SK-N-SH (cell line): ENCODE measurements at regions of chr19 and their contacts with region 1.

Region 1: DNA sequence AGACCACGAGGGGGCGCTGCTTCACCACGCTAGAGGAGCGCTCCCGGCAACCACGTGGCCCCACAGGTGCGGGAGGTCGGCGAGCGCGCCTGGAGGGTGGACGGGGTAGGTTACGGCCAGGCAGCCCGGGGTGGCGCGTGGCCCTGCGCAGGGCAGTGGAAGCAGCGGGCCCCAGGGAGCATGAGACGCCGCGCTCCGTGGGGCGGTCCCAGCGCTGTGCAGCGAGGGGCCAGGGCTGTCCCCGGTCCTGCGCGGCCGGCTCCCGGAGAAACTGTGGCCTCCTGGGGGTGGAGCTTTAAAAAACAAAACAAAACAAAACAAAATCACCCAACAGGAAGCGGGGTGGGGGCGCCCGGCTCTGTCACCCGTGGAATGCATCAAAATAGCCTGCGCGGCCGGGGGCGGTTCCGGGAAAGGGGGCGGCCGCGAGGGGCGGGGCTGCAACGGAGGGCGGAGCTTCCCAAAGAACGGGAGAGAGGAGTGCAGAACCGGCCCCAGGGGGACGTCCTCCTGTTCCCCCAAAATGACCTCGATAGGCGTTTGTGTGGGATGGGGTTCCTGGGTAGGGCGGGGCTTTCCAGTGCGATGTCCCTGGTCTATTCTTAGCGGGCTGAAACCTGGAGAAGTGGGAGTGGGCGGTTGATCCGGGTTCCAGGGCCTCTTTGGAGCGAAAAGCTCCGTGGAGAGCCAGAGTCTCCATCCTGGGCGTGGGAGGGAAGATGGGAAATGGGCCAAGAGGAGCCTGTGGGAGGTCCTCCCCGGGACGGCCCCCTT is 27.3 kb downstream of the NUMBL start:
- DNase-seq: peak; percentile 93
- H3K4me3 ChIP-seq: peak overlapping the region; percentile 61 to 91
- H3K27ac ChIP-seq: peak overlapping the region; percentile 62 to 67
- H3K4me1 ChIP-seq: peaks cover 6 to 10% of the 10 kb centered on the region in 2 experiments; a peak in 3 of 4 replicates
- H3K27me3 ChIP-seq: no peaks in the 10 kb centered on the region
- CTCF ChIP-seq: no peak; the same call in 1 of the 2 replicates
- EP300 ChIP-seq: no peak
- RAD21 ChIP-seq: peak; percentile 89

Region 2: GRCh38 chr19:40584007-40584406 is 79.1 kb before region 1 on chr19:
- CTCF ChIA-PET with region 1: no interaction called
- POLR2A ChIA-PET with region 1: no interaction called
- DNase-seq: peak; percentile 31
- H3K4me3 ChIP-seq: no peak overlapping the region
- H3K27ac ChIP-seq: no peak overlapping the region
- H3K4me1 ChIP-seq: no peaks in the 10 kb centered on the region
- H3K27me3 ChIP-seq: no peaks in the 10 kb centered on the region
- CTCF ChIP-seq: peak; percentile 47
- EP300 ChIP-seq: no peak
- RAD21 ChIP-seq: no peak

Region 3: DNA sequence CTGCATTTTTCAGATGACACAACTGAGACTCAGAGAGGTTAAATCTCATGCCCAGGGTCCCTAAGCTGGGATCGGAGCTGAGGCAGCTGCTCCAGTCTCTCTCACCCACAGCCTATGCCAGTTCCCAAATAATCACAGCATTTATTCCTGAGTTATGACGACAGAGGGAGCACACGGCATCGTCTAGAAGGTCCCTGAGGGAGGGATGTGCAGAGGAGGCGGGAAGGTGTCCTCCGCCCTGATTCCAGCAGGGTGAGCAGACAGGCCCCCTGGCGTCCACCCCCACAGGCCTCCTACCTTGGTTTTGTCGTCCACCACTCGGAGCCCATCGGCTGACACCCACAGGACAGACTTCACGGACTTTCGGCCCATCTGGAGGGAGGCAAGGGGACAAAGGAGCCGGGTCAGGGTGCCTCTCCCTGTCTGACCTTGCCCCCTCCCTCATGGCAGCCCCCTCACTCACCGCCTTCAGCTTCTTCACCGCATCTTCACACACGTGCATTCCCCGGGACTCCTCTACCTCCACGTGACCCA is 19.4 kb after region 1 on chr19:
- CTCF ChIA-PET with region 1: interaction called, 14 read pairs
- POLR2A ChIA-PET with region 1: no interaction called
- DNase-seq: no peak
- H3K4me3 ChIP-seq: no peak overlapping the region
- H3K27ac ChIP-seq: no peak overlapping the region
- H3K4me1 ChIP-seq: no peaks in the 10 kb centered on the region; a peak in 1 of 4 replicates
- H3K27me3 ChIP-seq: no peaks in the 10 kb centered on the region
- CTCF ChIP-seq: no peak
- EP300 ChIP-seq: no peak
- RAD21 ChIP-seq: no peak

Region 4: DNA sequence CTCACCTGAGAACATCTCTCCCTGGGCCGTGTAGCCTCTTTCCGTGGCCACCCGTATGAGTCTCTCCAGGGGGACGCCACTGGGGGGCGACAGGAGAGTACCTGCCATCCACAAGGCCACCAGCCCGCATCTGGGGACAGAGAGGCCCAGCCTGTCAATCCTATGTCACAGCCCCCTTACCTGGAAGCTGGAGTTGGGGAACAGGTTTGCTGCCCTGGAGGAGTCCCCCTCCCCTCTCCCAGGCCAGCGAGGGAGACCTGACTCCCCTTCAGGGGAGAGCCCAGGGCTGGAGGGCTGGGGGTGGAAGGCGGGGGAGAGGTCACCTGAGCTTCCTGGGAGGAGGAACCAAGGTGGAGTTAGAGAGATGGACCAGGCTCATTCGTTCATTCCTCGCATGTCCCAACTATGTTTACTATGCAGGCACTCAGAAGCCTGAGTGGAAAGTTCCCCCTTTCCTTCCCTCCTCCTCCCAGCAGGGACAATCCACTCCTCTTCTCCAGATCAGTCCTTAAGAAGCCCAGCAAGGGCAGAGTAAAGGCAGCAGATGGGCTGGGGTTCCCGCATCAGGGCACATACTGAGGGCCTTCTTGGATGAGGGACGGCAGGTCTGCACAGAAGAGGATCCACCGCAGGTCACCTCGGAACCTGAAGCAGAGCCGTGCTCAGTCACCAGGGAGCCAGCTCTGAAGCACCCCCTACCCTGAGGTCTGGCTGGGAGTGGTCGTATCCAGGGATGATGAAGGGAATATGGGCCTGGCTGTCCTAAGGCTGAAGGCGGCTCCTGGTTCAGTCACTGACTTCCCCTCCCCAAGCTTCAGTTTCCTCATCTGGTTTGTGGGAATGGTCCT is 81.7 kb after region 1 on chr19:
- CTCF ChIA-PET with region 1: interaction called, 10 read pairs
- POLR2A ChIA-PET with region 1: no interaction called
- DNase-seq: peak; percentile 51
- H3K4me3 ChIP-seq: no peak overlapping the region
- H3K27ac ChIP-seq: peak overlapping the region in 1 of 2 experiments; percentile 30; a peak in 1 of 4 replicates
- H3K4me1 ChIP-seq: peaks cover 9 to 11% of the 10 kb centered on the region in 2 experiments; a peak in 1 of 4 replicates
- H3K27me3 ChIP-seq: no peaks in the 10 kb centered on the region
- CTCF ChIP-seq: no peak; the same call in 1 of the 2 replicates
- EP300 ChIP-seq: no peak
- RAD21 ChIP-seq: no peak

Region 5: DNA sequence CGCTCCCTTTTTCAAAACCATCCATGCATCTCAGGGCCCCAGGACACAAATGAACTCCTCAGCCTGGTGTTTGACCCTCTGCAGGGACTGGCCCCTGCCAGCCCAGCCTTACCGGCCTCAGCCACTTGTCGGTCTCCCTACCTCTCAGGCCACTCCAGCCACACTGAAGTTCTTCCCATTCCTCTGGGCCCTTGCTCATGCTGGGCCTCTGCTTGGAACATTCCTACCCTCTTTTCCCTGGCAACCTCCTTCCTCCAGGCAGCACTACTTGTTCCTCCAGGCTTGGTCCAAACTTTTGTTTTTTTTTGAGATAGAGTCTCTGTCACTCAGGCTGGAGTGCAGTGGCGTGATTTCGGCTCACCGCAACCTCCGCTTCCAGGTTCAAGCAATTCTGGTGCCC is 128.2 kb after region 1 on chr19:
- CTCF ChIA-PET with region 1: no interaction called
- POLR2A ChIA-PET with region 1: no interaction called
- DNase-seq: no peak
- H3K4me3 ChIP-seq: no peak overlapping the region
- H3K27ac ChIP-seq: no peak overlapping the region
- H3K4me1 ChIP-seq: no peaks in the 10 kb centered on the region
- H3K27me3 ChIP-seq: no peaks in the 10 kb centered on the region
- CTCF ChIP-seq: no peak
- EP300 ChIP-seq: no peak
- RAD21 ChIP-seq: no peak

Region 6: DNA sequence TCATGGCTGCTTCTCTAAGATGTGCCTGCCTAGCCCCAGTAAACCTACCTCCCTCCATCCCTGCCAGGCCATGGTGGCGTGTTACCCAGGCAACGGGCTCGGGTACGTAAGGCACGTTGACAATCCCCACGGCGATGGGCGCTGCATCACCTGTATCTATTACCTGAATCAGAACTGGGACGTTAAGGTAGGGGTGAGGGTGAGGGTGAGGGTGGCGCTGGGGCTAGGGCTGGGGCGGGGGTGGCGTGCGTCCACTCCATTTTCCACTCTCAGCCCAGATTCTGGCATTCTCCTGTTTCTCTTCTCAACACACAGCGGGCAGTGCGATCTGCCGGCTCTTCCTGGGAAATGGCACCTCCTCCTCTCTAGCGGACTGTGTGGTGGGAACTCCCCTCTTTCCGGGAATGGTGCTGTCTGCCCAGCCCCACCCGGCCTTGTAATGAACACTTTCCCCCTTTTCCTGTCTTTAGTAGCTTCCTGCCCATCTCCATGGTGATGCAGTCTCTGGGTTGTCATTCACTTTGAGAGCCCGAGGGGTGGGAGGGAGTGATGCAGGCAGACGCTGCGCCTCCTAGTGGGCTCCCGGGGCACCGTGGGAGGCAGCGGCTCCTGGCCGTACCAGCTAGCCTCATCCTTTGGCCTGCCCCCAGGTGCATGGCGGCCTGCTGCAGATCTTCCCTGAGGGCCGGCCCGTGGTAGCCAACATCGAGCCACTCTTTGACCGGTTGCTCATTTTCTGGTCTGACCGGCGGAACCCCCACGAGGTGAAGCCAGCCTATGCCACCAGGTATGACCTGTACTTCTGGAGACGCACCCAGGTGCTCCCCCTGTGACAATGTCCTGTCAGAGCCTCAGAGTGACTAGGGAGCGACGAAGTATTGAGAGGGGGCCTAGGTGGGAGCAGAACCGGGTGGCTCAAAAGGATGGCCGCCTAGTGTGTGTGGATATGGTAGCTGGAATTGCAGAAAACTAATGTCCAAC is 143.7 kb after region 1 on chr19:
- CTCF ChIA-PET with region 1: interaction called, 54 read pairs
- POLR2A ChIA-PET with region 1: interaction called, 6 read pairs
- DNase-seq: peak; percentile 97
- H3K4me3 ChIP-seq: peak overlapping the region; percentile 21 to 45; a peak in 3 of 4 replicates
- H3K27ac ChIP-seq: peak overlapping the region; percentile 72 to 78
- H3K4me1 ChIP-seq: peaks cover 27 to 61% of the 10 kb centered on the region in 2 experiments; a peak in 3 of 4 replicates
- H3K27me3 ChIP-seq: no peaks in the 10 kb centered on the region
- CTCF ChIP-seq: peak; percentile 97
- EP300 ChIP-seq: no peak
- RAD21 ChIP-seq: peak; percentile 60